Activated CD4-positive, alpha-beta T cell treated with anti-CD3 and anti-CD28 coated beads, Interleukin-2, amount 10 ng/mL, durations not matched to agents 7 days and 5 days (primary cell): ENCODE measurements at regions of chr19 and their contacts with region 1.

Region 1: DNA sequence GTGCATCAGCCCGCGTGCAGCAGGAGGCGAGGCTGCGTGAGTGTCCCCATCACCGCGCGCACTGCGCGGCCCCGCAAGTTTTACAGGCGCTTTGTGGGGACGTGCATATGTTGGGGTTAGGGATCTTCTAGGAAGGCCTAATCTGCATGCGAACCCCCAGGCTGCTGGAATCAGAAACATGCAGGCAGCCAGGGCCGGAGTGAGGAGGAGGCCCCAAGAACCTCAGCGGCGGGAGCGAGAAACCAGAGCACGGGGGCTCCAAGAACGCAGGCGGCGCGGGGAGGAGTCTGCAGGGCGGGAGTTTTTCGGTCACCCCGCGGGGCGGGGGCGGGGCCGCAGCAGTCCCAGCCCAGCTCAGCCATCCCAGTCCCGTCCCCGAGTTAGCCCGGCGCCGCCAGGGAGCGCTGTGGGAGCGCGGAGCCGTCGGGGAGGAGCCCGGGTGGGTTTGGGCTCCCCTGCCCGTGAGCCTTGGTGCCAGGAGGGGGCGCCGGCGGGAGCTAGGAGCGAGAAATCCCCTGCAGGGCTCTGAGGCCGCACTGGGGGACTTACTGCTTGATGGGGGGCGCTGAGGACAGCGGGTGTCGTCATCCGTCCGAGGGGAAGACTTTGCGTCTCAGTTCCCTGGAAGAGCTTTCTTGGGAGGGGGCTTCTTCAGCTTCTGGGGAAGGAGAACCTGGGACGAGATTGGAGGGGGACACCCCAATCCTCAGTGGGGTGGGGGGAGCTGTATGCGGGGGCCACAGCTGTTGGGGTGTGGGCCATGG is 933 bp upstream of the NRTN start:
- DNase-seq: peak; percentile 92
- H3K4me3 Mint-ChIP-seq: peak overlapping the region; percentile 62
- H3K27ac Mint-ChIP-seq: peak overlapping the region; percentile 60
- H3K4me1 Mint-ChIP-seq: peaks cover 28% of the 10 kb centered on the region
- H3K27me3 Mint-ChIP-seq: peaks cover 45% of the 10 kb centered on the region

Region 2: GRCh38 chr19:5790573-5791520 is 13.1 kb before region 1 on chr19 and contains the start of gene DUS3L:
- CTCF ChIA-PET with region 1: interaction called, 74 read pairs
- POLR2A ChIA-PET with region 1: no interaction called
- DNase-seq: peak; percentile 97
- H3K4me3 Mint-ChIP-seq: peak within 1 kb of the TSS; percentile 100
- H3K27ac Mint-ChIP-seq: peak within 1 kb of the TSS; percentile 100
- H3K4me1 Mint-ChIP-seq: peaks cover 11% of the 10 kb centered on the region
- H3K27me3 Mint-ChIP-seq: no peaks in the 10 kb centered on the region
- total RNA-seq, gene DUS3L: 49.9 to 60.8 TPM

Region 3: DNA sequence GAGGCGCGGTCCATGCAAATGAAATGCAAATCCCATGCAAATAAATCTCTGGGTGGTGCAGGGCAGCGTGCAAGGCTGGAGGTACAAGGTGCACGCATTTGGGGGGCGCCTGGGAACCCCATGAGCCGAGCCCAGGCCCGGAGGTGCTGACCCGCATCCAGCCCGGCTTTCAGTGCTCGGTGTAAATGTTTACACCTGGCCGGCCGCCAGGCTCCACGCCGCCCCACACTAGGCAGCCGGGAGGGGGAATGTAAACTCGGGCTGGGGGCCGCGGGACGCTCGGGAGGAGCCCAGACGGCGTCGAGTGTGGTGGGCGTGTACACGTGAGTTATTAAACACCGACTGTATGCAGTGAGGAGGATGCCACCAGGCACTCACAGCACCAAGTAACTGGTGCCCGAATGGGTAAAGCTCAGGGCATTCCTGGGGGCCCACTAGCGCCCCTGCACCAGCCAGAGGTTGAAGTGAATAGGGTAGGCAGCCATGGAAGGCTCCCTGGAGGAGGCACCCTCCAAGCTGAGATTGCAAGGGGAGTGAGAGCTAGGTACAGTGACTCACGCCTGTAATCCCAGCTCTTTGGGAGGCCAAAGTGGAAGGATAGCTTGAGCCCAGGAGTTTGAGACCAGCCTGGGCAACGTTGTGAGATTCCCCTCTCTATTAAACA is 18.4 kb after region 1 on chr19:
- CTCF ChIA-PET with region 1: interaction called, 60 read pairs
- POLR2A ChIA-PET with region 1: no interaction called
- DNase-seq: no peak
- H3K4me3 Mint-ChIP-seq: no peak overlapping the region
- H3K27ac Mint-ChIP-seq: no peak overlapping the region
- H3K4me1 Mint-ChIP-seq: peaks cover 5% of the 10 kb centered on the region
- H3K27me3 Mint-ChIP-seq: no peaks in the 10 kb centered on the region

Region 4: DNA sequence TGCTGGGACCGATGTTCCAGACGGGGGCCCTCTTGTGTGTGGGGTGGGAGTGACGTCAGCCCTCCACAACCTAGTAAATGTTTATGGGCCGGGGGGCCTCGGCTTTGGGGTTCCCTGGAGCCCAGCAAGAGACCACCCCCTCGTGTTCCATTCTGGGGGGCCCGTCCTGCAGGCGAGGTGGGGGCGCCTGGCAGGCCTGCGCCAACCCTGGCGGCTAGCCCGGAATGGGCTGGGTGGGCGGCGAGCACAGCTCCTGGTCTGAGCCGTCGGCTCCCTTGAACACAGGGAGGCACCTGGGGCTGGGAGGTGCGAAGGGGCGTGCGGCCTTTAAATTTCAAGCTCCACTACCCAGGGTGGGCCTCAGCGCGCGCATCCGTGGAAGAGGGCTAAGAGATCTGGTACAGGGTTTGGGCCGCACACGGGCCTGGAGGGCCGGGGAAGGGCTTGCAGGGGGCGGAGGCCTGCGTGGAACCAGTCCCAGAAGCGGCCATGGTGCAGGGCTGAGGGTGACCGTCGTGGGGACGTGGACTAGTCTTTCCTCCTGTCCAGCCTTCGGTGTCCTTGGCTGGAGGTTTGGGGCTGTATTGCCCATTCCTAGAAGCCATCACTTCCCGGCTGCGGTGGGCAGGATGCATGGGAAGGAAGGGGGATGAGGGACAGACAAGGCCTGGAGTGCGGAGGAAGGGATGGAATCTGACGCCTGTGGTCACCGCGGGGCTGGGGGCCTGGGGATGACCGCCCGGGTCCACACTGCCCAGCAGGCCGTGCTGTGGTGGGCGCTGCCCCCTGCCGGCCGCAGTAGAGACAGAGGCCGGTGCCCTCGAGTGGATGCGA is 88.2 kb after region 1 on chr19:
- CTCF ChIA-PET with region 1: interaction called, 10 read pairs
- POLR2A ChIA-PET with region 1: no interaction called
- DNase-seq: no peak
- H3K4me3 Mint-ChIP-seq: no peak overlapping the region
- H3K27ac Mint-ChIP-seq: no peak overlapping the region
- H3K4me1 Mint-ChIP-seq: no peaks in the 10 kb centered on the region
- H3K27me3 Mint-ChIP-seq: peaks cover 4% of the 10 kb centered on the region

Region 5: DNA sequence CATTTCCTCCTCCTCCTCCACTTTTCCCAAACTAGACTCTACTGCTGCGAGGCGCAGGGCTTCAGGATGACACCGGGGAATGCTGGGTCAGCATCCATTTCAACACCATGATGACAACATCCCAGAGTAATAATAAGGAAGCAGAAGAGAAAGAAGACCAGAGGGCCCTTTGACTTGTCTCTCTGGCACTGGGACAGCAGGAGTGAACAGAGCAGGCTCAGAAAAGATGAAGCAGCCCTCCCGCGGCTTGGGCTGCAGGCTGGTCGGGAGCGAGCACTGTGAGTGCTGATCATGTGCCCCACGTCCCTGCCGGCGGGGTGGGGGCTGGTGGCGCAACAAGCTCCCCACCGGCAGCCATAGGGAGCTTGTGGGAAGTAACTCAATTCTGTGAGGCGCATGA is 143.5 kb after region 1 on chr19:
- CTCF ChIA-PET with region 1: interaction called, 10 read pairs
- POLR2A ChIA-PET with region 1: interaction called, 3 read pairs
- DNase-seq: no peak
- H3K4me3 Mint-ChIP-seq: no peak overlapping the region
- H3K27ac Mint-ChIP-seq: peak overlapping the region; percentile 93
- H3K4me1 Mint-ChIP-seq: peaks cover 61% of the 10 kb centered on the region
- H3K27me3 Mint-ChIP-seq: no peaks in the 10 kb centered on the region

Region 6: GRCh38 chr19:5985098-5985783 is 181.3 kb after region 1 on chr19:
- CTCF ChIA-PET with region 1: interaction called, 13 read pairs
- POLR2A ChIA-PET with region 1: no interaction called
- DNase-seq: no peak
- H3K4me3 Mint-ChIP-seq: no peak overlapping the region
- H3K27ac Mint-ChIP-seq: no peak overlapping the region
- H3K4me1 Mint-ChIP-seq: peaks cover 48% of the 10 kb centered on the region
- H3K27me3 Mint-ChIP-seq: no peaks in the 10 kb centered on the region